Lower leg skin (tissue), 4 donors: ENCODE measurements at regions of chr2 and their contacts with region 1.

Region 1: DNA sequence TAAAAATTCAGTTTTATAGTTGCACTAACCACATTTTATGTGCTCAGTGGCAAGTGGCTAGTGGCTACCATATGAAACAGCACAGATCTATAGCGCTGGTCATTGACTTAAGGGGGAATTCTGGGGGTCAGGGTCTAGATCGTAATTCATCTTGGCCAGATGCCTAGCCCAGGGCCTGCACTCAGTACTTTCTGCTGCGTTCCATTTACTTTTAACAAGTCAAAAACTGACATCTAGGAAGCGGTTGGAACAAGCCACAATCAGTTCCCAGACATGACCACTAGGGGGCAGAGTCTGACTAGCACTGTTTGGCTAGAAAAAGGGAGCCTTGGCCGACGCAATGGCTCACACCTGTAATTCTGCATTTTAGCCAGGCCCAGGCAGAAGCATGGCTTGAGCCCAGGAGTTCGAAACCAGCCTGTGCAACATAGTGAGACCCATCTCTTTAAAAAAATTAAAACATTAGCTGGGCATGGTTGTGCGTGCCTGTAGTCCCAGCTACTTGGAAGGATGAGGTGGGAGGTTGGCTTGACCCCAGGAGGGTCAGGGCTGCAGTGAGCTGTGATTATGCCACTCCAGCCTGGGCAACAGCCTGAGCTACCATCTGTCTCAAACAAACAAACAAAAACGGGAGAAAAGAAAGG is 9.0 kb upstream of the TMBIM1 start:
- DNase-seq: peak; percentile 86 to 96
- H3K4me3 ChIP-seq: no peak overlapping the region
- CTCF ChIP-seq: peak in 2 of 3 donors; percentile 9 to 91
- POLR2A ChIP-seq: no peak

Region 2: DNA sequence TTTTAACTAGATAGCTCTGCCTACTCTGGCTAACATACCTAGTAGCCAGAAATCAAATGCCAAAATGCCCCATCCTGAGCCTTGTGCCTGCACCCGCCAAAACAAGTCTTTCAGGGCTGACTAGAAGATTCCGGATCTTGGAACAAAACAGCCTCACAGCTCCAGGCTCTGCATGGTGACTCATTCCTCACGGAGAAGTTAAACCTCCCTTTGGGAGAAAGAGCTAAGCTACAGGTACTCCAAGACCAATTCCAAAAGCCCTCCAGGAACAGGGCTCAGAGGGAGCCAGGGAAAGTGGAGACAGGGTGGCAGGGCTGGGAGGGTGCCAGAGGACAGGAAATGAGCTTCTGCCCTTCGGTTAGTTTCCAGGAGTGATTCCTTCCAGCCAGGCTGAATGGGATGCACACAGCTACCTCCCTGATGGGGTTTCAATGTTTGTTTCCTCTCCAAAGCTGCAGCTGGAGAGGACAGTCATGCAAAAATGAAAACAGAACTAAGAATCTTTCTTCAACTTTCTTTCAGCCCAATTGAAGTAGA is 594.1 kb before region 1 on chr2:
- intact Hi-C with region 1: no loop called
- DNase-seq: peak; percentile 85 to 89
- H3K4me3 ChIP-seq: no peak overlapping the region
- CTCF ChIP-seq: no peak
- POLR2A ChIP-seq: no peak

Region 3: DNA sequence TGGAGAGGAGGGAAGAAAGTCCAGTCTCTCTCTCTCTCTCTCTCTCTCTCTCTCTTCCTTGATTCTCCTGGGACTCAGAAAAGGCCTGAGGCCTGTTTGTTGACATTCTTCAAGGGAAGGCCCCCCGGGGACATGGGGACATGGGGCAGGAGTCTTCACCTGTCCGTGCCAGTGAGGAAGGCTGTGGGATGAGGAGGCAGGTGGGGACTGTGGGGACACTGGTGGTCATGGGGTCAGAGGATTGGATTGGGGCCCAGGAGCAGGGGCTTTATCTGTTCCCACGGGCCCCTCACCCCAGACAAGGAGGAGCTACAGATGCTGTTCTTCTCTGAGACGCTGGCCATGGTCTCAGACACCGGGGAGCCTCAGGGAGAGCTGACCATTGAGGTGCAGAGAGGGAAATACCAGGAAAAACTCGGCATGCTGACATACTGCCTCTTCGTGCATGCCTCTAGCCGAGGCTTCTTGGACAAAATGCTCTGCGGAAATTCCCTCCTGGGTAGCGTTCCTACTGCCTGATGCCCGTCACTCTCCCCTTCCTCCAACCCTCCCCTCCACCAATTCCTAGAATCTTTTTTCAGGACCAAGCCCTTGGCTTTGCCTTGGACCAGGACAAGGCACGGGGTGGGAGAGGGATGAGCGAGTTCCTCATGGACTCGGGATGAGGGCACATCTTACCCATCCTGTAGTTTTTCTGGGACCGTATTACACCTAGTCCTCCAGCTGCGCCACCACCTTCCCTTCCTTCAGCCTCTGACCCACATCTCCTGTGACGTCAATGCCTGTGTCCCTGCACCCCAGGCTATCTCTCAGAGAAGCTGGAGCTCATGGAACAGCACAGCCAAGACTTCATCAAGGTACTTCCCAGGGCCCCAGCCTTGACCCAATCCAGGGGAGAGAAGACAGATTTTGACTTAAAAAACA is 56.2 kb after region 1 on chr2:
- intact Hi-C with region 1: loop called (anchors 10 kb)
- DNase-seq: no peak
- H3K4me3 ChIP-seq: no peak overlapping the region
- CTCF ChIP-seq: no peak
- POLR2A ChIP-seq: no peak

Region 4: DNA sequence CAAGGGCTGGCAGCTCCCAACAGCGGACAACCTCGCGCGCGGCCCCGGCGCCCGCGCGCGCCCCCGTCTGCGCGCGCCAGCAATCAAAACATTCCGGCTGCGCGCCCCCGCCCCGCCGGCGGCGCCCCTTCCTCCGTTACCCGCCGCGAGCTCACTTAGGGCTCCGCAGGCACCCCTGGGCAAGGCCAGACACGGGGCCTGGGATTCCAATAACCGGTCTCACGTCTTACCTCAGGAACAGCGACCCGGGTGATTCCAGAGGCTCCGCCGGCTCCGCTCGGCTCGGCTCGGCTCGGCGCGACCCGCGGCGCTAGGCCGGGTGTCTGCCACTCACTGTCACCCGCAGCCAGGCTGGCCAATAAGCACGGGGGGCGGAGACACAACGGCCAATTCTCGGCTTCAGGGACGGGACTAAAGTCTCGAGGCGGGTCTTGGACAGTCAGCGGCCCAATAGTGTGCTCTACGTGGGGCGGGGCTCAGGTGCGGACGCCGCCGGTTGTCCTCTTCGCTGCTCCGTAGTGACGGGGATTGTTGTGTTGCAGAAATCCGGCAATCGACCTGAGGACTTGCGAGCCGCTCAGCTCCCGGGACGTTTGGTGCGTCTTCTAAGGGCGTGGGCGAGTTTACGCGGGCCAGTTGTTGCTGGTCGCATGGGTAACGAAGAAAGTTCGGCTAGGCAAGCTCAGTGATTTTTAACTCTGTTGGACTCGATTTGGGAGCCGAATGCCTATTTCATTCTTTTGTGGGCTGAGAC is 928.2 kb after region 1 on chr2 and contains the starts of genes ANKZF1 and ATG9A:
- intact Hi-C with region 1: loop called (anchors 10 kb)
- DNase-seq: peak; percentile 99 to 100
- H3K4me3 ChIP-seq: peak within 1 kb of the TSS; percentile 46
- CTCF ChIP-seq: peak in 1 of 3 donors; percentile 43
- POLR2A ChIP-seq: no peak
- total RNA-seq, gene ANKZF1: 45.9 to 97.6 (median 52.5) TPM
- total RNA-seq, gene ATG9A: 57.6 to 92.8 (median 61.9) TPM